MCF 10A (cell line): ENCODE measurements at regions of chr4 and their contacts with region 1.

Region 1: GRCh38 chr4:176044589-176044951 is 21.1 kb upstream of the WDR17 start:
- DNase-seq: no peak
- H3K4me3 Mint-ChIP-seq: no peak overlapping the region
- H3K27ac Mint-ChIP-seq: no peak overlapping the region
- H3K4me1 Mint-ChIP-seq: peaks cover 5% of the 10 kb centered on the region
- H3K27me3 Mint-ChIP-seq: no peaks in the 10 kb centered on the region
- CTCF ChIP-seq: no peak

Region 2: GRCh38 chr4:175054980-175055379 is 989.6 kb before region 1 on chr4:
- CTCF ChIA-PET with region 1: no interaction called
- POLR2A ChIA-PET with region 1: no interaction called
- intact Hi-C with region 1: no loop called
- DNase-seq: no peak
- H3K4me3 Mint-ChIP-seq: no peak overlapping the region
- H3K27ac Mint-ChIP-seq: no peak overlapping the region
- H3K4me1 Mint-ChIP-seq: no peaks in the 10 kb centered on the region
- H3K27me3 Mint-ChIP-seq: no peaks in the 10 kb centered on the region
- CTCF ChIP-seq: no peak

Region 3: DNA sequence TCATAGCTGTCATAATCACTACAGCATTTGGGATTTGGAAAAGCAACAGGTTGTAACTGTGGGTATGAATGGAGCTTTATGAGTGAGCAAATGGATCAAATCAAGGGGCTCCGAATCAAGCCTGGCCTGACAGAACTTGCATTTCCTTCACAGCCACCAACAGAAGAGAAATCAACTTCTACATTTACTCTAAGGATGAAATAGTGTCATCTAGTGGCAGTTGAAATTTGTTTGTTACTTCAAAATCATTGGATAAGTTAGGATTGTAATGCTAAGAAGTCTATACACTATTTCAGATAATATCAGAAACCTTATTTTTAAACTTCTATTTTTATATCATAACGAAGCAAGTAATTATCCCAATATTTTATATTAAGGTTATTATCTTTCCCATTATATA is 10.4 kb after region 1 on chr4:
- CTCF ChIA-PET with region 1: interaction called, 15 read pairs
- POLR2A ChIA-PET with region 1: interaction called, 4 read pairs
- intact Hi-C with region 1: no loop called
- DNase-seq: no peak
- H3K4me3 Mint-ChIP-seq: no peak overlapping the region
- H3K27ac Mint-ChIP-seq: no peak overlapping the region
- H3K4me1 Mint-ChIP-seq: no peaks in the 10 kb centered on the region
- H3K27me3 Mint-ChIP-seq: no peaks in the 10 kb centered on the region
- CTCF ChIP-seq: peak; percentile 18